Adrenal gland (tissue), 19 donors: ENCODE measurements at regions of chr3 and their contacts with region 1.

Region 1: DNA sequence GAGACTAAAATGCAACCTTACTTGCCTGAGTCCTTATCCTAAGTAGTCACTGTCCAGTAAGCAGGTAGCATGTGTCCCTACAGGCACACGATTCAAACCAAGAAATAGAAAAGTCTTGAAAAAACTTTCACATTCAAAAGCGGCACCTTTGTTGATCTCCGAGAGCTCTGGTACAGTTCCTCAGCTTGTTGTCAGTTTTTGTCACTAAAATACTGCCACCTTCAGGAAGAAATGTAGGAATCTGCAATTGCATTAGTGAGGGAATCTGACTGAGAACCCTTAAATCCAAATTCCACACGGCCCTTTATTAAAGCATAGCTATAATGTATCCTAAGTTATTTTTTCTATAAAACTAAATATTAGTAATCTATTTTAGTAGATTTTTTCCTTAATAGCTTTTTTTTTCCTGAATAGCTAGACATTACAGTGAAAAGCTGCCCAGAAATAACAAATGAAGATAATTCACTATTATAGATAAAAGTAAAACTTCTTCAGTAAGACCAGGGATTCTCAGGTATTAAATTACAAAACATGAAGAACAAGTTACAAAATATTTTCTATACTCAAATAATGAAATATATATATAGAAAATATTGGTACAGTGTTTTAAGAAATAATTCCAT is 44.0 kb downstream of the CCDC54 start:
- DNase-seq: peak in 3 of 7 donors; percentile 27 to 38 (median 27)
- H3K4me3 ChIP-seq: peak overlapping the region in 1 of 4 donors; percentile 59
- H3K27ac ChIP-seq: no peak overlapping the region
- H3K4me1 ChIP-seq: no peaks in the 10 kb centered on the region
- H3K27me3 ChIP-seq: no peaks in the 10 kb centered on the region
- CTCF ChIP-seq: peak; percentile 65 to 74 (median 70)
- POLR2A ChIP-seq: no peak

Region 2: GRCh38 chr3:107271787-107272387 is 149.4 kb before region 1 on chr3:
- intact Hi-C with region 1: loop called (anchors 5 to 10 kb)
- DNase-seq: no peak
- H3K4me3 ChIP-seq: no peak overlapping the region
- H3K27ac ChIP-seq: no peak overlapping the region
- H3K4me1 ChIP-seq: peaks cover 7 to 8% of the 10 kb centered on the region in 2 donors
- H3K27me3 ChIP-seq: no peaks in the 10 kb centered on the region
- CTCF ChIP-seq: peak; percentile 47 to 80 (median 72)
- POLR2A ChIP-seq: no peak